Activated CD4-positive, alpha-beta T cell treated with anti-CD3 and anti-CD28 coated beads, Interleukin-2, amount 10 ng/mL, durations not matched to agents 24 days and 14 days (primary cell): ENCODE measurements at regions of chr1 and their contacts with region 1.

Region 1: GRCh38 chr1:18681423-18681835 is 50.8 kb downstream of the PAX7 start:
- DNase-seq: peak; percentile 74
- H3K4me3 Mint-ChIP-seq: no peak overlapping the region
- H3K27ac Mint-ChIP-seq: no peak overlapping the region
- H3K4me1 Mint-ChIP-seq: peaks cover 3% of the 10 kb centered on the region
- H3K27me3 Mint-ChIP-seq: peaks cover 1% of the 10 kb centered on the region

Region 2: GRCh38 chr1:18597160-18598042 is 84.0 kb before region 1 on chr1:
- intact Hi-C with region 1: loop called (anchors 1 kb)
- DNase-seq: peak; percentile 85
- H3K4me3 Mint-ChIP-seq: no peak overlapping the region
- H3K27ac Mint-ChIP-seq: no peak overlapping the region
- H3K4me1 Mint-ChIP-seq: no peaks in the 10 kb centered on the region
- H3K27me3 Mint-ChIP-seq: peaks cover 15% of the 10 kb centered on the region